WTC11 (cell line): ENCODE measurements at regions of chr6 and their contacts with region 1.

Region 1: DNA sequence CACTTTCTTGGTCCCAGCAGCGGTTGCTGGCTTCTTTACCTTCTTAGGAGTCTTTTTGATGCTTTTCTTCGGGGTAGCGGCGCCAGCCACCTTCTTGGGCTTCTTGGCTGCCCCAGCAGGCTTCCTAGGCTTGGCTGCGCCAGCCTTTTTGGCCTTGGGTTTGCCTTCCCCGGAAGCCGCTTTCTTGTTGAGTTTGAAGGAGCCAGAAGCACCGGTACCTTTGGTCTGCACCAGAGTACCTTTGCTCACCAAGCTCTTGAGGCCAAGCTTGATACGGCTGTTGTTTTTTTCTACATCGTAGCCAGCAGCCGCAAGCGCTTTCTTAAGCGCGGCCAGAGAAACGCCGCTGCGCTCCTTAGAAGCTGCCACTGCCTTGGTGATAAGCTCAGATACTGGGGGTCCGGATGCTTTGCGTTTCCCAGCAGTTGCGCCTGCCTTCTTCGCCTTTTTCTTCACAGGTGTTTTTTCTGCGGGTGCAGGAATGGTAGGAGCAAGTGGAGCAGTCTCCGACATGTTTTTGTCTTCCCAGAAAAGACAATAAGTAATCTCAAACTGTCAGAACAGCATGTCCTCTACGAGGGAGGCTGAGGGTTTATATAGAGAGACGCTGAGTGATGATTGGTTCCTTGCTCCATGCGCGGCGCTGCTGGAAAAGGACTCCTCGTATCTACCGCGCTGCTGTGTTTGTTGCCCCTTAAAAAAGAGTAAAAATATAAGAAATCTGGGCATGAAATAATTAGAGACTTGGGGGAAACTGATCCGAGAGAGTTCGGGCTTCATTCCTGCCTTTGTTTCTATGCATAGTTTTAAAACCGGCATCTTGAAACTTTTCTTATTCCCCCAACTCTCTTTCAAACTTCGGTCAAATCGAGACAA is 130.3 kb upstream of the BTN3A2 start:
- DNase-seq: no peak
- ATAC-seq: peak; percentile 70
- H3K4me3 Mint-ChIP-seq: peak overlapping the region; percentile 94
- H3K27ac Mint-ChIP-seq: peak overlapping the region; percentile 99
- H3K4me1 Mint-ChIP-seq: peaks cover 33% of the 10 kb centered on the region
- H3K27me3 Mint-ChIP-seq: no peaks in the 10 kb centered on the region
- CTCF ChIP-seq: no peak

Region 2: DNA sequence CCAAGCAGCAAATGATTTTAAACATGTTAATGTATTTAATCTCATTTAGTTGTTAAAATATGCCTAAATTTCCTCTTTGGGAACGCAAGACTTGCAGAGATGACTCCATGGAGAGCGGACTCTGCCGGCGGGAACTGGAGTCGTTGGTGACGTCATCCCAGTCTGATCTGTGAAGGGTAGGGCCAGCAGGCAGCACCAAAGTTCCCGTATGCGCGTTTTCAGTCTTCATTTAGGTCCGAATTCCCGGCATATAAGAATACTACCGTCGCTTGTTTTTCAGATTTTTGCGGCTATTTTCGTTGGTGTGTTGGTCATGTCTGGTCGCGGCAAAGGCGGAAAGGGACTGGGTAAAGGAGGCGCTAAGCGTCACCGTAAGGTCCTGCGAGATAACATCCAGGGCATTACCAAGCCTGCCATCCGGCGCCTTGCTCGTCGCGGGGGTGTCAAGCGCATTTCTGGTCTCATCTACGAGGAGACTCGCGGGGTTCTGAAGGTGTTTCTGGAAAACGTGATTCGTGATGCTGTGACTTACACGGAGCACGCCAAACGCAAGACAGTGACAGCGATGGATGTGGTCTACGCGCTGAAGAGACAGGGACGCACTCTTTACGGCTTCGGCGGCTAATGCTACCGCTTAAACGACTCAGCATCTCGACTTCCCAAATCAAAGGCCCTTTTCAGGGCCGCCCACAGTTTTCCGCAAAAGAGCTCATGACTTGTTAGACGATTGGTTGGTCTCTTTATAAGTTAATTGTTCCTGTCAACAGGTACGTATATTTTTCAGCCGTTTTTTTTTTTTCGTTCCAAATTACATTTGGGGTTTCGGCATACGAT is 30.1 kb before region 1 on chr6:
- CTCF ChIA-PET with region 1: no interaction called
- POLR2A ChIA-PET with region 1: interaction called, 100 read pairs
- DNase-seq: peak; percentile 90
- ATAC-seq: peak; percentile 58
- H3K4me3 Mint-ChIP-seq: no peak overlapping the region
- H3K27ac Mint-ChIP-seq: no peak overlapping the region
- H3K4me1 Mint-ChIP-seq: peaks cover 22% of the 10 kb centered on the region
- H3K27me3 Mint-ChIP-seq: no peaks in the 10 kb centered on the region
- CTCF ChIP-seq: no peak

Region 3: GRCh38 chr6:26223650-26224546 is 10.8 kb before region 1 on chr6:
- CTCF ChIA-PET with region 1: no interaction called
- POLR2A ChIA-PET with region 1: interaction called, 216 read pairs
- DNase-seq: no peak
- ATAC-seq: peak; percentile 69
- H3K4me3 Mint-ChIP-seq: no peak overlapping the region
- H3K27ac Mint-ChIP-seq: no peak overlapping the region
- H3K4me1 Mint-ChIP-seq: peaks cover 42% of the 10 kb centered on the region
- H3K27me3 Mint-ChIP-seq: no peaks in the 10 kb centered on the region
- CTCF ChIP-seq: no peak

Region 4: DNA sequence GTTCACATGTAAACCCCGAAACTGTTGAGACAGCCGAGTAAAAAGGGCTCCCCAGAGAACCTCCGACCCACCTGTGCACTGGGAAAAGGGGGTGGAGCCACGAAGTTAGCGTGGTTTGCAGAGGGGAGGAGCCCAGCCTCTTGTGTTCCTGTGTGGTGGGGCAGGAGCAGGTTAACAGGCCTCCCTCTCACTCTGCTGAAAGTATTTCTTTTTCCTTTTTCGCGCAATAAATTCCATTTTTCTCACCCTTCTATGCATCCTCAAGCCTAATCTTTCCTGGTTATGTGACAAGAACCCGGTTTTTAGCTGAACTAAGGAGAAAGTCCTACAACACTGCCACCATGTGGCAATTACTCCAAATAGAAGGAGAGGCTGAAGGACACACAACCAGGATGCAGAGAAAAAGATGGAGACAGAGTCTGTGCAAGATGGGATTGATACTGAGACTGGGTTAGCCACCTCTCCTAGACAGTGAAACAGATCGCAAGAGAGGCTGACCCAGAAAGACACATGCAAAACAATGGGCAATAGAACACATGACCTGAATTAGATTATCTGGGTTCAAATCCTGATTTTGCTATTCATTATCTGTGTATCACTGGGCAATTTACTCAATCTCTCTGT is 844.2 kb after region 1 on chr6:
- CTCF ChIA-PET with region 1: no interaction called
- POLR2A ChIA-PET with region 1: no interaction called
- DNase-seq: peak; percentile 77
- ATAC-seq: peak; percentile 100
- H3K4me3 Mint-ChIP-seq: peak overlapping the region; percentile 87
- H3K27ac Mint-ChIP-seq: no peak overlapping the region; the same call in 1 of the 2 replicates
- H3K4me1 Mint-ChIP-seq: 0 out of 2 replicates have a peak, but pooled peaks cover 3% of the 10 kb centered on the region
- H3K27me3 Mint-ChIP-seq: peaks cover 15% of the 10 kb centered on the region
- CTCF ChIP-seq: peak; percentile 63

Region 5: DNA sequence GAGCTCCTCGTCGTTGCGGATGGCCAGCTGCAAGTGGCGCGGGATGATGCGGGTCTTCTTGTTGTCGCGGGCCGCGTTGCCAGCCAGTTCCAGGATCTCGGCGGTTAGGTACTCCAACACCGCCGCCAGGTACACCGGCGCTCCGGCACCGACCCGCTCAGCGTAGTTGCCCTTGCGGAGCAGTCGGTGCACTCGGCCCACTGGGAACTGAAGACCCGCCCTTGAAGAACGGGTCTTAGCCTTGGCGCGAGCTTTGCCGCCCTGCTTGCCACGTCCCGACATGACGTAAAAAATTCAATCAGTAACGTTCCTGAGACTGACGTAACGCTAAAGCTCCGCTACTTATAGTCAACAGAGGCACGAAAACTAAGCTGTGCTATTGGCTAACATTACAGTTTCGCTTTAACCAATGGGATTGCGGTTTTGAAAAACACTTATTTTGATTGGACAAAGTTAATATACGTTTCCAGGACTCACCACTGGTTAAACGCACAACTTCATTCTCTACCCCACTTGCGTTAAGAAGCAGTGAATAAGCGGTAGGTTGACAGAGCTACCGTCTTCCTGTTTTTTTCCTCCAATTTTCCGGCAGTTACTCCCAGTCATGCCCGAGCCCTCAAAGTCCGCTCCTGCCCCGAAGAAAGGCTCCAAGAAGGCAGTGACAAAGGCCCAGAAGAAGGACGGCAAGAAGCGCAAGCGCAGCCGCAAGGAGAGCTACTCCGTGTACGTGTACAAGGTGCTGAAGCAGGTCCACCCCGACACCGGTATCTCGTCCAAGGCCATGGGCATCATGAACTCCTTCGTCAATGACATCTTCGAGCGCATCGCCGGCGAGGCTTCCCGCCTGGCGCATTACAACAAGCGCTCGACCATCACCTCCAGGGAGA is 1603.6 kb after region 1 on chr6:
- CTCF ChIA-PET with region 1: no interaction called
- POLR2A ChIA-PET with region 1: interaction called, 13 read pairs
- DNase-seq: peak; percentile 84
- ATAC-seq: peak; percentile 84
- H3K4me3 Mint-ChIP-seq: no peak overlapping the region
- H3K27ac Mint-ChIP-seq: no peak overlapping the region
- H3K4me1 Mint-ChIP-seq: peaks cover 28% of the 10 kb centered on the region
- H3K27me3 Mint-ChIP-seq: no peaks in the 10 kb centered on the region
- CTCF ChIP-seq: no peak

Region 6: GRCh38 chr6:27871924-27872638 is 1637.4 kb after region 1 on chr6:
- CTCF ChIA-PET with region 1: no interaction called
- POLR2A ChIA-PET with region 1: interaction called, 17 read pairs
- DNase-seq: peak; percentile 79
- ATAC-seq: peak; percentile 58
- H3K4me3 Mint-ChIP-seq: peak overlapping the region; percentile 94
- H3K27ac Mint-ChIP-seq: peak overlapping the region; percentile 99
- H3K4me1 Mint-ChIP-seq: peaks cover 50% of the 10 kb centered on the region
- H3K27me3 Mint-ChIP-seq: no peaks in the 10 kb centered on the region
- CTCF ChIP-seq: no peak